Psoas muscle (tissue), 8 donors: ENCODE measurements at regions of chrX and their contacts with region 1.

Region 1: GRCh38 chrX:133670383-133670782 is 255.1 kb upstream of the GPC4 start:
- DNase-seq: no peak
- ATAC-seq: peak in 3 of 4 donors; percentile 56 to 64 (median 60)
- H3K4me3 ChIP-seq: no peak overlapping the region
- H3K27ac ChIP-seq: no peak overlapping the region
- H3K4me1 ChIP-seq: no peaks in the 10 kb centered on the region
- H3K27me3 ChIP-seq: no peaks in the 10 kb centered on the region
- CTCF ChIP-seq: peak; percentile 79

Region 2: GRCh38 chrX:132968296-132968949 is 702.0 kb before region 1 on chrX:
- intact Hi-C with region 1: loop called (anchors 10 kb)
- DNase-seq: no peak
- ATAC-seq: peak; percentile 68 to 84 (median 79)
- H3K4me3 ChIP-seq: no peak overlapping the region
- H3K27ac ChIP-seq: no peak overlapping the region
- H3K4me1 ChIP-seq: no peaks in the 10 kb centered on the region
- H3K27me3 ChIP-seq: peaks cover 0 to 11% (median 0%) of the 10 kb centered on the region in 3 donors
- CTCF ChIP-seq: no peak

Region 3: DNA sequence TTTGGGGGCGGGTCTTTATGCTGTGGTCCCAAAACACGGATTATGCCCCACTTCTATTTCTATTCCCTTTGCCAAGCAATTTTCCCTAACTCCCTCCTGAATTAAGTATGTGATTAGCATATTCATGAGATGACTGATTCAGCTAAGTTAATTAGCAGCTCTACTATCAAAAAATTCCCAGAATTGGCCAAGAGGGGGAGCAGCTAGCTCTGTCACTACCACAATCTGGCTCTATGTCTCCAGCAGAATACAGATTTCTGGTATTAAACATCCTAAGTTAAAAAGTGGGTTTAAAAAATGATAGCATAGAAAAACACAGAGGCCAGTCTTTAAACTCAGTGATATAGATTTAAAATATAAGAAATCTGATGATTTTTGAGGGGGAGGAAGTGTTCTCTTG is 335.4 kb before region 1 on chrX:
- intact Hi-C with region 1: loop called in 1 of 2 experiments (anchors 5 kb)
- DNase-seq: no peak
- ATAC-seq: peak in 1 of 4 donors; percentile 63
- H3K4me3 ChIP-seq: no peak overlapping the region
- H3K27ac ChIP-seq: no peak overlapping the region
- H3K4me1 ChIP-seq: no peaks in the 10 kb centered on the region
- H3K27me3 ChIP-seq: no peaks in the 10 kb centered on the region
- CTCF ChIP-seq: peak; percentile 46

Region 4: GRCh38 chrX:133468046-133468445 is 202.3 kb before region 1 on chrX:
- intact Hi-C with region 1: loop called (anchors 2 to 10 kb)
- DNase-seq: no peak
- ATAC-seq: peak in 3 of 4 donors; percentile 50 to 75 (median 58)
- H3K4me3 ChIP-seq: no peak overlapping the region
- H3K27ac ChIP-seq: no peak overlapping the region
- H3K4me1 ChIP-seq: no peaks in the 10 kb centered on the region
- H3K27me3 ChIP-seq: peaks cover 0 to 18% (median 0%) of the 10 kb centered on the region in 3 donors
- CTCF ChIP-seq: no peak

Region 5: DNA sequence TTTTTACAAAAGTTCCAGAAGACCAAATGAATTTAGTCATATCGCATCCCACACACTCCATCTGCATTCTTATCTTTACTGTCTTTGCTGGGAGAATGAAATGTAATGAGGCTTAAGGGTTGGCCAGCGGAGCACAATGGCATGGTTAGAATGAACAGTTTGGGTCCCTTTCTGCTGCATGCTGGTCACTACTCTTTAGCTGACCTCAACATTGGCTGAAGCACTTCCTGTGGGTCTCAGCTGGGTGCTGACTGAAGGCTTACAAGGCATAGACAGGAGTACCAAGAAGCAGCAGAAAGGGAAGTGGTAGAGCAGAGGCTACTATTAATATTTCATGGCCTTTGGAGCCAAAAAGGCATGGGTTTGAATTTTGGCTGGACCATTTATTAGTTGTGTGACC is 95.7 kb before region 1 on chrX:
- intact Hi-C with region 1: no loop called
- DNase-seq: no peak
- ATAC-seq: no peak
- H3K4me3 ChIP-seq: no peak overlapping the region
- H3K27ac ChIP-seq: no peak overlapping the region
- H3K4me1 ChIP-seq: no peaks in the 10 kb centered on the region
- H3K27me3 ChIP-seq: peaks cover 0 to 6% (median 0%) of the 10 kb centered on the region in 3 donors
- CTCF ChIP-seq: no peak